K562 (cell line): ENCODE measurements at regions of chr7 and their contacts with region 1.

Region 1: DNA sequence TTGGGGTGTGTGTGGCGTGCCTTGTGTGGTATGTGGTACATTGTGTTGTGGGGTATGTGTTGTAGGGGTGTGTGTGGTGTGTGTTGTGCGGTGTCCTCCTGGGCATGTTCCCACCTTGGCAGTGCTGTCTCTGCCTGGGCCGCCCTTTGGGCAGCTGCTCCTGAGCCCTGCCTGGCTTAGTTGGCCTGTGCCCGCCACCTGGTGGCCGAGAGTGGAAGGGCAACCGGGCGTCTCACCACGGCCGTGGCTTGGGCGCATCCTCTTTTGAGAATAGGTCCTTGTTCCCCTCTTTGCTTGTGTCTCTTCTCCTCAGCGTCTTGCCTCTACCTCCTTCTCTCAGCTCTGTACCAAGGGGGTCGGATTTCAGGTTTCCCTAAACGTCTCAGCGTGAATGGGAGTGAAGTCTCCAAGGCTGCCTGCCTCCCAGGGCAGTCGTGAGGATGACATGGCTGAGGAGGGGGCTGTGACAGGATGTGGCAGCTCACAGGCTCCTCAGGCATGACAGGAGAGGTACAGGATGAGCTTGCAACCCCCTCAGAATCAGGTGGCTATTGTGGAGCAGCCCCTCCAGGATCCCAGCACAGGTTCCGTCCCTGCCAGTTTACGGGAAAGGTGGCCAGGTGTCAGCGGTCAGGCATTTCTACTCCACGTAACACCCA is 98.4 kb upstream of the PODXL start:
- DNase-seq: peak; percentile 85 to 95 (median 90)
- ATAC-seq: peak; percentile 97
- H3K4me3 ChIP-seq: no peak overlapping the region
- H3K27ac ChIP-seq: no peak overlapping the region
- H3K4me1 ChIP-seq: no peaks in the 10 kb centered on the region
- H3K27me3 ChIP-seq: peaks cover 11 to 33% of the 10 kb centered on the region in 2 experiments
- CTCF ChIP-seq: peak; percentile 96 to 98 (median 97)
- EP300 ChIP-seq: no peak
- POLR2A ChIP-seq: no peak
- RAD21 ChIP-seq: peak; percentile 97 to 99

Region 2: DNA sequence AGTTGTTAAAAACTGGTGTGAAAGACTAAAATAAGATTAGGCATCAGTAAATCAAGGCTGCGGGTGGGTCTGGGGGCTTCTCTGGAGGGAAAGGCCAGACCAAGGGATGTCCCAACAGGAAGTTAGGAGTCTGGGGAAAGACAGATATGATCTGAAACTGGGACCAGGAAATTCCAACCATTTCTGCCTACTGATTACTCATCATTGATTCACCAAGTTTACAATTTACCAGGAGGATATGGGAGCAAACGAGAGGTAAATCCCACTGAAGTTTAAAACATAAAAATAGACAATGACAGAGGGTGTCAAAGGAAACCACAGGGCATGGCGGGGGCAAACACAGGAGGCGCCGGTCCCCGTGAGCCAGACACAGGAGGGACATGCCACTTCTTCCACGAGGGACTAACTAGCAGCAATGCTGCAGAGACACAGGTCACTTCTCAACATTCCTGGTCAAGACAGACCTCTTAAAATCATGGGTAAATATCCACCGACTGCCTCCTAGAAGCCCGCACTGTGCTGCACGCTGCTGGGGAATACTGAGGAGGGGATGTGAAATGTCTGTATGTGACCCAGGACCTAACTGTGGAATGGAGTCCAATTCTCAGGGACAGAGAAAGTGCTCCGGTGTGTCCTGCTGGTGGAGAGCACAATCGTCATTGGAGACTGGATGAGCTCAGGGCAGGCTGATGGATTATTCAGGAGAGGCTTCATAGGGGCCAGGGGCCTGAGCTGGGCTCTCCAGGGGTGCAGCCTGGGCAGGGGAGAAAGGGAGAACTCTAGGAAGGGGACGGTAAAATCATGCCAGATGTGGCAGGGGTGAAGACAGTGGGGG is 767.4 kb before region 1 on chr7:
- CTCF ChIA-PET with region 1: interaction called, 3 read pairs
- POLR2A ChIA-PET with region 1: no interaction called
- in situ Hi-C with region 1: loop called (anchors 10 kb)
- intact Hi-C with region 1: no loop called
- DNase-seq: no peak
- ATAC-seq: no peak; the same call in 2 of the 3 replicates
- H3K4me3 ChIP-seq: no peak overlapping the region
- H3K27ac ChIP-seq: no peak overlapping the region
- H3K4me1 ChIP-seq: peaks cover 0 to 6% of the 10 kb centered on the region in 2 experiments; a peak in 2 of 5 replicates
- H3K27me3 ChIP-seq: no peaks in the 10 kb centered on the region
- CTCF ChIP-seq: no peak
- EP300 ChIP-seq: no peak
- POLR2A ChIP-seq: no peak
- RAD21 ChIP-seq: no peak

Region 3: DNA sequence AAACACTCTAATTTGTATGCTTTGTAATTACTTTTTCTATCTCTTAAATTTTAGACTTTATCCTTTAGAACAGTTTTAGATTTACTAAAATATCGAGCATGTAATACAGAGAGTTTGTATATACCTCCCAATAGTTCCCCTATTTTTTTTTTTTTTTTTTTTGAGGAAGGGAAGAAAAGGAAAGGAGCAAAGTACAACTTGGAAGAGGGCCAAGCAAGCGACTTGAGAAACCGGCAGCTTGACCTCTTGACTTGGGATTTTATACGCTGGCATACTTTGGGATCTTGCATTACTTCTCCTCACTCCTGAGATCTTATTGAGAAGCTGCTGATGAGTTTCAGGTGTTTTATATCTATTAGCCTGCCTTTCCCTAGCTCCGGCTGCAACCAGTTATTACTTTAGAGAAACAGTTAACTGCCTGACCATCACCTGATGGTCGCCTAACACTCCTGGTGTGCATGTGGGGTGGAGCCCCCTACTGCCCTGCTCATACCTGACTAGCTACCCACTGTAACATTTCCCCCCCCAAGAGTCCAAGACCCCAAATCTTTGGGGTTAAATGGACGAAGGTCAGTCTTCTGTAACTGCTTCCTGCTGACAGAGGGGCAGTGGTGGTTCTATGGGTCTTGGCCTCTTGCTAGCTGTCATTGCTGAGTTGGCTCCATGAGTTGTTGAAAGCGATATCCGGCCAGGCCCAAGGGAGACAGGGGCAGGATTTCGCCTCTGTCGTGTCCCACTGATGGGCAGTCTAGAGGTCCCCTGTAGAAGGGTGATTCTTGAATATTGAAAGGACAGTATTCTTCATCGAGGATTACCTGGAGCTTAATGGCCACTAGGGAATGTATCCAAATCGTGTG is 298.6 kb before region 1 on chr7:
- CTCF ChIA-PET with region 1: no interaction called
- POLR2A ChIA-PET with region 1: no interaction called
- in situ Hi-C with region 1: no loop called
- intact Hi-C with region 1: no loop called
- DNase-seq: peak in 1 of 4 experiments; percentile 60
- ATAC-seq: peak; percentile 53
- H3K4me3 ChIP-seq: no peak overlapping the region
- H3K27ac ChIP-seq: no peak overlapping the region
- H3K4me1 ChIP-seq: no peaks in the 10 kb centered on the region; a peak in 1 of 5 replicates
- H3K27me3 ChIP-seq: no peaks in the 10 kb centered on the region
- CTCF ChIP-seq: 0 out of 6 replicates have a peak, but pooled peaks of 1 of the 3 experiments have one; percentile 7
- EP300 ChIP-seq: no peak
- POLR2A ChIP-seq: no peak
- RAD21 ChIP-seq: no peak

Region 4: DNA sequence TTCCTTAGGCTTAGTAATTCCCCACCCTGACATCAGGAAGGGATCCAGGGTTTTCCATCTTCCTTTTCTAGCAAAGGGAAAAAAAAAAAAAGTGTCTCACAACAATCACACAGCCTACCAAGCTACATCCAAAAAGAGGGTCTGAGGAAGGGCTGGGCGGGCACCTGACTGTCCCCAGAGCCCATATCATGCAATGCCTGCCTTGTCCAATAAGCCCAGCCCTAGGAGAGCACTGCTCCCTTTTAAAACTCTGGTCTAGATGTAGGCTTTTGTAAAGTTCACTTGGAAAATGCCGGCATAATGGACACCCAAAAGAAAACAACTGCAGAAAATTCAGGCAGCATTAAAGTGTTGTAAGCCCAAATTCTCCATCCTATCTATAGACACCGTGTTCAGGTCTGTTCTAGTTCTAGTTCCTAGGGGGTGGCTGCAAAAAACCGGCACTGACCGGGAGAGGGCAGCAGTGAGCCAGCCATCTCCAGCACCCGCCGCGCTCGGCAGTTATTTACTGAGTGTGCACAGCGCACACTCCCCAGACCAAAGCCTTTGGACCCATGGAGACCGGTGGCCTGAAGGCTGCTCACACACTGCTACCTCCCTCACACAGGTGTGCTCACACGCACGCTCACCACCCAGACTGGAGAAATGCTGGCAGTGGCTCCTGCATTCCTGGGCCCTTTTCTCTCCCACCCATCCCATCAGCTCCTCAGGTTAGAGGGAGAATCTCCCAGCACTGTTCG is 147.0 kb before region 1 on chr7:
- CTCF ChIA-PET with region 1: interaction called, 31 read pairs
- POLR2A ChIA-PET with region 1: no interaction called
- in situ Hi-C with region 1: loop called (anchors 10 kb)
- intact Hi-C with region 1: loop called (anchors 1 kb)
- DNase-seq: peak; percentile 81 to 89 (median 88)
- ATAC-seq: peak; percentile 92
- H3K4me3 ChIP-seq: no peak overlapping the region
- H3K27ac ChIP-seq: no peak overlapping the region
- H3K4me1 ChIP-seq: peaks cover 2 to 12% of the 10 kb centered on the region in 2 experiments; a peak in 2 of 5 replicates
- H3K27me3 ChIP-seq: peaks cover 40 to 68% of the 10 kb centered on the region in 2 experiments
- CTCF ChIP-seq: peak; percentile 95 to 99 (median 96)
- EP300 ChIP-seq: no peak
- POLR2A ChIP-seq: no peak
- RAD21 ChIP-seq: peak; percentile 77 to 91

Region 5: DNA sequence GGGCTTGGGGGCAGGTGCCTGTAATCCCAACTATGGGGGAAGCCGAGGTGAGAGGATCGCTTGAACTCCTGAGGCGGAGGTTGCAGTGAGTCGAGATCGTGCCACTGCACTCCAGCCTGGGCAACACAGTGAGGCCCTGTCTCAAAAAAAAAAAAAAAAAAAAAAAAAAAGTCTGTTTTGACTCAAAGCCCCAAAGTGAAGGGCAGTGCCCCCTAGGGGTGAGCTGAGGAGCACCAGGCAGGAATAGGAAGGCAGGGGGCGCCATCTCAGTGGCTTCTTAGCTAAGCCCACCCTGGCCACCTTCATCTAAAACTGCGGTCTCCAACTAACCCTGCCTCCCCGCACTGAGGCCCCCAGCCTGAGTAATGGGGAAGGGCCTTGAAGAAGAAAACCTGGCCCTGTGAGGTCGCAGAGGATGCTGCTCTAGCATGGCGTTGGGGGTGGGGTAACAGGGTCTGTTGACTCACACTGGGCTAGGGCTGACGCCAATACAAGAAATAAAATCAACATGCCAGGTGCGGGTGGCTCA is 108.2 kb before region 1 on chr7:
- CTCF ChIA-PET with region 1: interaction called, 85 read pairs
- POLR2A ChIA-PET with region 1: interaction called, 3 read pairs
- in situ Hi-C with region 1: loop called (anchors 5 kb)
- intact Hi-C with region 1: loop called (anchors 1 kb)
- DNase-seq: peak; percentile 83 to 94 (median 90)
- ATAC-seq: peak; percentile 85
- H3K4me3 ChIP-seq: no peak overlapping the region
- H3K27ac ChIP-seq: no peak overlapping the region
- H3K4me1 ChIP-seq: peaks cover 3 to 5% of the 10 kb centered on the region in 2 experiments; a peak in 2 of 5 replicates
- H3K27me3 ChIP-seq: peaks cover 22 to 64% of the 10 kb centered on the region in 2 experiments
- CTCF ChIP-seq: peak; percentile 99
- EP300 ChIP-seq: no peak
- POLR2A ChIP-seq: no peak
- RAD21 ChIP-seq: peak; percentile 32 to 68; a peak in 2 of 4 replicates